ENCODE measurements at regions of chr17 and their contacts with region 1.

Region 1: DNA sequence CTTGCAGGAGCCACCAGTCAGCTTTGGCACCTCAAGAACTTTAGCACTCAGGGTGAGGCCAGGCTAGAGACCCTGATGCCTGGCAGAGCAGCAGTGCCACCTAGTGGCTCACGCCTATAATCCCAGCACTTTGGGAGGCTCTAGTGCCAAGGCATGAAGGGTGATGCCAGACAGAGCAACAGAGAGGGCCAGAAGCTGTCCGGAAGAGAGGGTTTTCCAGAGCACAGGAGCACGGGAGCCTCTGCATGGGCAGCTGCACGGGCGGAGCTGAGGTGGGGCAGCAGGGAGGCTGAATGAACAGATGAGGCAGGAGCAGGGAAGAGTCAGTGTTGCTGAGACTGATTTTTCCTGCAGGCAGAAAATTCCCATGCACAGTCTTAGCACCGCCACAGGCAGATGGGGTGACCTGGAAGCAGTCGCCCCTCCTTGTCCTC is 38.9 kb downstream of the MYH3 start:
- DNase-seq: peak; percentile 66
- ATAC-seq: peak; percentile 86
- H3K4me3 Mint-ChIP-seq: no peak overlapping the region
- H3K27ac Mint-ChIP-seq: no peak overlapping the region
- H3K4me1 Mint-ChIP-seq: no peaks in the 10 kb centered on the region
- H3K27me3 Mint-ChIP-seq: no peaks in the 10 kb centered on the region

Region 2: GRCh38 chr17:10327640-10328039 is 290.6 kb before region 1 on chr17:
- CTCF ChIA-PET with region 1: interaction called, 29 read pairs
- DNase-seq: peak; percentile 80
- ATAC-seq: no peak
- H3K4me3 Mint-ChIP-seq: no peak overlapping the region
- H3K27ac Mint-ChIP-seq: no peak overlapping the region
- H3K4me1 Mint-ChIP-seq: peaks cover 1% of the 10 kb centered on the region
- H3K27me3 Mint-ChIP-seq: no peaks in the 10 kb centered on the region

Region 3: DNA sequence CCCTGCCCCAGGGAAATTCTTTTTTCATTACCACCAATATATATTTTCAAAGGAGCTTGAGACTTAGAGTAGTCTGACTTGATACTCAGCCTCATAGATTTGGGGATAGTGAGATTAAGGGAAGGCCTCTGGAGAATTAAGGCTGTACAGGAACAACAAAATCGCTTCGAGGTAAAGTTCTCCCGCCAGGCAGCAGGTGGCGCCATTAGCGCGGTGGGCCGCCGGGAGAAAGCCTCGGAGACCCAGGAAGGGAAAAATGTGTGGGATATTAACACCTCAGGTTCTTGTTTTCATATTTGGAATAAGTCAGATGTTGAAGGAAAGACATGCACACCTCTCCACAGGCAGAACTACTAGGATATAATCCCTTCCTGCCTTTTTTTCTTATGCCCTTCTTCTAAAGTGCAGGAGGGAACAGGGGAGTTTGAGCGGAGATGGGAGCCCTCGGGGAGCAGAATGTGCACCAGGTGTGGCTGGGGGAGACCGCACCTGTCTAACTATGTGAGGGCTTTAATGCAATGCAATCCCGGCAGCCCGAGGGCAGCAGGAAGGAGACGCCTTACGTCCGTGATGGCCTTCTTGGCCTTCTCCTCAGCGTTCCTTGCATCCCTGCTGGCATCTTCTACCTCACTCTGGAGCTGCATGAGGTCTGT is 13.0 kb after region 1 on chr17:
- CTCF ChIA-PET with region 1: interaction called, 65 read pairs
- DNase-seq: peak; percentile 44
- ATAC-seq: no peak
- H3K4me3 Mint-ChIP-seq: no peak overlapping the region
- H3K27ac Mint-ChIP-seq: no peak overlapping the region
- H3K4me1 Mint-ChIP-seq: peaks cover 3% of the 10 kb centered on the region
- H3K27me3 Mint-ChIP-seq: no peaks in the 10 kb centered on the region

Region 4: GRCh38 chr17:10640475-10640874 is 22.3 kb after region 1 on chr17:
- CTCF ChIA-PET with region 1: interaction called, 13 read pairs
- DNase-seq: no peak
- ATAC-seq: no peak
- H3K4me3 Mint-ChIP-seq: no peak overlapping the region
- H3K27ac Mint-ChIP-seq: no peak overlapping the region
- H3K4me1 Mint-ChIP-seq: peaks cover 3% of the 10 kb centered on the region
- H3K27me3 Mint-ChIP-seq: no peaks in the 10 kb centered on the region

Region 5: DNA sequence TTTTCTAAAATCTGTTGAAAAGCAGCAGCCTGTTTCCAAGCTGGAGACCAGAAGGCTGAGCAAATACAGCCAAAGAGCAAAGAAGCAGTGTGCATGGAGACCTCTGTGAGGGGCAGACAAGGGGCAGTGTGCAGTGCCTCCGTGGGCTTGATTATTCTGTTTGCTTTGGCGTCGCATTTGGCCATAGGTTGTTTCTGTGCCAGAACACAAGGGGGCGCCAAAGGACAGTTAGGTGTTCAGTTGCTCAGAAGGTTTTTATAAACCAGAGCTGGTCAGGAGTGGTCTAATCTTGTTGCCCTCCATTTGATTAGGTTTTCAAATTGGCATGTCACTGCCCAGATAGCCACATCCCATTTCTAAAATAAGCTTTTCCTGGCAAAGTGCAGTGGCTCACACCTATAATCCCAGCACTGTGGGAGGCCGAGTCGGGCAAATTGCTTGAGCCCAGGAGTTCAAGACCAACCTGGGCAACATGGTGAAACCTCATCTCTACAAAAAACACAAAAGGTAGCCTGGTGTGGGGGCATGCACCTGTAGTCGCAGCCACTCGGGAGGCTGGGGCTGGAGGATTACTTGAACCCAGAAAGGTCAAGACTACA is 28.3 kb after region 1 on chr17:
- CTCF ChIA-PET with region 1: interaction called, 17 read pairs
- DNase-seq: peak; percentile 79
- ATAC-seq: peak; percentile 65
- H3K4me3 Mint-ChIP-seq: no peak overlapping the region
- H3K27ac Mint-ChIP-seq: no peak overlapping the region
- H3K4me1 Mint-ChIP-seq: peaks cover 2% of the 10 kb centered on the region
- H3K27me3 Mint-ChIP-seq: no peaks in the 10 kb centered on the region

Region 6: GRCh38 chr17:10844621-10845387 is 226.6 kb after region 1 on chr17:
- CTCF ChIA-PET with region 1: interaction called, 12 read pairs
- DNase-seq: peak; percentile 77
- ATAC-seq: peak; percentile 92
- H3K4me3 Mint-ChIP-seq: peak overlapping the region; percentile 73
- H3K27ac Mint-ChIP-seq: no peak overlapping the region
- H3K4me1 Mint-ChIP-seq: peaks cover 5% of the 10 kb centered on the region
- H3K27me3 Mint-ChIP-seq: peaks cover 22% of the 10 kb centered on the region

Measured in activated CD8-positive, alpha-beta memory T cell treated with anti-CD3 and anti-CD28 coated beads, Interleukin-2, amount 10 ng/mL, durations not matched to agents 7 days and 5 days (primary cell).